ENCODE measurements at regions of chr13 and their contacts with region 1.

Region 1: GRCh38 chr13:41222259-41222852 is 28.0 kb upstream of the KBTBD7 start:
- DNase-seq: peak; percentile 40
- ATAC-seq: peak; percentile 51
- H3K4me3 ChIP-seq: no peak overlapping the region
- H3K27ac ChIP-seq: no peak overlapping the region
- H3K4me1 ChIP-seq: peaks cover 11% of the 10 kb centered on the region
- H3K27me3 ChIP-seq: no peaks in the 10 kb centered on the region
- CTCF ChIP-seq: peak; percentile 60
- POLR2A ChIP-seq: no peak
- RAD21 ChIP-seq: peak; percentile 62

Region 2: GRCh38 chr13:40789275-40790133 is 432.9 kb before region 1 on chr13 and contains the start of gene SLC25A15:
- CTCF ChIA-PET with region 1: no interaction called
- POLR2A ChIA-PET with region 1: no interaction called
- dilution Hi-C with region 1: no loop called
- in situ Hi-C with region 1: no loop called
- intact Hi-C with region 1: loop called (anchors 10 kb)
- DNase-seq: peak; percentile 72
- ATAC-seq: peak; percentile 91
- H3K4me3 ChIP-seq: peak within 1 kb of the TSS; percentile 78
- H3K27ac ChIP-seq: peak within 1 kb of the TSS; percentile 97
- H3K4me1 ChIP-seq: peaks cover 4% of the 10 kb centered on the region; the same call in 1 of the 2 replicates
- H3K27me3 ChIP-seq: no peaks in the 10 kb centered on the region
- CTCF ChIP-seq: peak; percentile 43
- POLR2A ChIP-seq: peak; percentile 58; the same call in 1 of the 2 replicates
- RAD21 ChIP-seq: peak; percentile 45
- total RNA-seq, gene SLC25A15: 13.3 and 16.1 TPM in 2 replicates

Region 3: GRCh38 chr13:41075034-41075433 is 147.3 kb before region 1 on chr13:
- CTCF ChIA-PET with region 1: no interaction called
- POLR2A ChIA-PET with region 1: no interaction called
- dilution Hi-C with region 1: no loop called
- in situ Hi-C with region 1: loop called (anchors 10 kb)
- intact Hi-C with region 1: loop called (anchors 1 kb)
- DNase-seq: peak; percentile 49
- ATAC-seq: peak; percentile 59
- H3K4me3 ChIP-seq: no peak overlapping the region
- H3K27ac ChIP-seq: no peak overlapping the region
- H3K4me1 ChIP-seq: no peaks in the 10 kb centered on the region
- H3K27me3 ChIP-seq: no peaks in the 10 kb centered on the region
- CTCF ChIP-seq: peak; percentile 76
- POLR2A ChIP-seq: no peak
- RAD21 ChIP-seq: peak; percentile 83

Region 4: GRCh38 chr13:41132512-41133152 is 89.7 kb before region 1 on chr13 and contains the start of gene KBTBD6:
- CTCF ChIA-PET with region 1: no interaction called
- POLR2A ChIA-PET with region 1: no interaction called
- dilution Hi-C with region 1: no loop called
- in situ Hi-C with region 1: no loop called
- intact Hi-C with region 1: loop called (anchors 5 kb)
- DNase-seq: peak; percentile 99
- ATAC-seq: peak; percentile 98
- H3K4me3 ChIP-seq: peak within 1 kb of the TSS; percentile 54
- H3K27ac ChIP-seq: peak within 1 kb of the TSS; percentile 77
- H3K4me1 ChIP-seq: peaks cover 13% of the 10 kb centered on the region
- H3K27me3 ChIP-seq: no peaks in the 10 kb centered on the region
- CTCF ChIP-seq: no peak
- POLR2A ChIP-seq: peak; percentile 26; the same call in 1 of the 2 replicates
- RAD21 ChIP-seq: no peak
- total RNA-seq, gene KBTBD6: 14.7 and 18.3 TPM in 2 replicates

Region 5: DNA sequence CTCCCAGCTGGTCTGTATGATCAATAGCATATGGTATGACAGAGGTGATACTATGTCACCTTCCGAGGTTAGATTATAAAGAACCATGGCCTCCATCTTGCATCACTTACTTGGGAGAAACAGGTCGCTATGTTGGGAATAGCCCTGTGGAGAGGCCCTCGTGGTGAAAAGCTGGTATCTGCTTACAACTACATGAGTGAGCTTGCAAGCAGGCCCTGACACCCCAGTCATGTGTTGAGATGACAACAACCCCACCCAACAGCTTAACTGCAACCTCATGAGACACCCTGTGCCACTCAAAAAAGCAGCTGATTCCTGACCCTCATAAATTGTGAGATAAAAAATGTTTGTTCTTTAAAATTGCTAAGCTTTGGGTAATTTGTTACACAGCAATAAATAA is 22.2 kb after region 1 on chr13:
- CTCF ChIA-PET with region 1: no interaction called
- POLR2A ChIA-PET with region 1: no interaction called
- dilution Hi-C with region 1: no loop called
- in situ Hi-C with region 1: no loop called
- intact Hi-C with region 1: no loop called
- DNase-seq: peak; percentile 56
- ATAC-seq: 0 out of 2 replicates have a peak, but pooled peaks have one; percentile 14
- H3K4me3 ChIP-seq: no peak overlapping the region
- H3K27ac ChIP-seq: no peak overlapping the region
- H3K4me1 ChIP-seq: peaks cover 4% of the 10 kb centered on the region
- H3K27me3 ChIP-seq: no peaks in the 10 kb centered on the region
- CTCF ChIP-seq: no peak
- POLR2A ChIP-seq: no peak
- RAD21 ChIP-seq: no peak

Region 6: GRCh38 chr13:41310963-41311606 is 88.7 kb after region 1 on chr13 and contains the start of gene NAA16:
- CTCF ChIA-PET with region 1: no interaction called
- POLR2A ChIA-PET with region 1: no interaction called
- dilution Hi-C with region 1: no loop called
- in situ Hi-C with region 1: no loop called
- intact Hi-C with region 1: loop called (anchors 1 kb)
- DNase-seq: peak; percentile 90
- ATAC-seq: peak; percentile 85
- H3K4me3 ChIP-seq: peak within 1 kb of the TSS; percentile 87
- H3K27ac ChIP-seq: peak within 1 kb of the TSS; percentile 91
- H3K4me1 ChIP-seq: peaks cover 12% of the 10 kb centered on the region
- H3K27me3 ChIP-seq: no peaks in the 10 kb centered on the region
- CTCF ChIP-seq: no peak
- POLR2A ChIP-seq: no peak
- RAD21 ChIP-seq: no peak
- total RNA-seq, gene NAA16: 6.6 and 13.1 TPM in 2 replicates

Region 7: GRCh38 chr13:41325752-41326151 is 103.4 kb after region 1 on chr13:
- CTCF ChIA-PET with region 1: no interaction called
- POLR2A ChIA-PET with region 1: no interaction called
- dilution Hi-C with region 1: no loop called
- in situ Hi-C with region 1: no loop called
- intact Hi-C with region 1: no loop called
- DNase-seq: no peak
- ATAC-seq: no peak
- H3K4me3 ChIP-seq: no peak overlapping the region
- H3K27ac ChIP-seq: no peak overlapping the region
- H3K4me1 ChIP-seq: no peaks in the 10 kb centered on the region
- H3K27me3 ChIP-seq: no peaks in the 10 kb centered on the region
- CTCF ChIP-seq: no peak
- POLR2A ChIP-seq: no peak
- RAD21 ChIP-seq: no peak